Heart left ventricle (tissue), 16 donors: ENCODE measurements at regions of chr11 and their contacts with region 1.

Region 1: DNA sequence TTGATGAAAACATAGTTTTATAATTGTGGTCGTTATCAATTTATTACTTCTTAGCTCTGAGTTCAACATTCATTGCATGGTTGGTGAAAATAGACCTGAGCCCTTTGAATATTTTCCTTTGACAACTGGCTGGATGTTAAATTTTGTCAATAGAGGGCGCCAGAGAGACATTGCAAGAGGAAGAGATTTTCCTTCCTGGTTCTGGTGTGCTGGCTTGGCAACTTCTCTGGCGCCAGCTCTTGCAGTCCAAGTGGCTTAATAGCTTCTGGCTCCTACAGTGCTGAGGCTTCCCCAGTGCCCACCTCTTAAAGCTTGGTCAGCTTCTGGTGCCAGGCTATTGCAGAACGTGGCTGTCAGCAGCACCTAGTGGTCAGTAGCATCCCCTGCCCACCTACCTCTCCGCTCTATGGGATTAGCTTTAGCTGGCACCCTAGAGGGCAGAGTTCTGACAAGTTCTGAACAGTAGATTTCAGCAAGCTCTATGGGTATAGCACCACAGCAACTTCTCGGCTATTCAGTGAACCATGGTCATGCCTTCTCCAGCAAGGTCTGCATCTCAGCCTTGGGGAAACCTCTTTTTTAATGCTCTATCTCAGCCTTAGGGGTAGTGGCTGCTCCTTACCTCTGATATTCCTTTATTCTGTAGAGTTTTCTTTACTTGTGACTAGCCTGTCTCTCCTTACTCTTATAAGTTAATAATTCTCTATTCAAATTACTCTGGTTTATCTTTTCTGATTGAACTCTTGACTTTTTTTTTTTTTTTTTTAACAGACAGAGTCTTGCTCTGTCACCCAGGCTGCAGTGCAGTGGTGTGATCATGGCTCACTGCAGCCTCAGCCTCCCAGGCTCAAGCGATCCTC is 59.4 kb downstream of the ACER3 start:
- DNase-seq: peak; percentile 68 to 84 (median 75)
- ATAC-seq: peak; percentile 78 to 93 (median 89)
- H3K4me3 ChIP-seq: peak overlapping the region in 4 of 12 donors; percentile 9 to 22 (median 14)
- H3K27ac ChIP-seq: no peak overlapping the region
- H3K4me1 ChIP-seq: peaks cover 0 to 20% (median 8%) of the 10 kb centered on the region in 12 donors
- H3K27me3 ChIP-seq: no peaks in the 10 kb centered on the region
- CTCF ChIP-seq: peak; percentile 84 to 94 (median 92)
- POLR2A ChIP-seq: no peak

Region 2: GRCh38 chr11:76721755-76722677 is 198.1 kb before region 1 on chr11:
- intact Hi-C with region 1: loop called in 1 of 10 experiments (anchors 5 kb)
- DNase-seq: peak; percentile 81 to 91 (median 83)
- ATAC-seq: peak; percentile 68 to 93 (median 92)
- H3K4me3 ChIP-seq: peak overlapping the region in 4 of 12 donors; percentile 11 to 34 (median 28)
- H3K27ac ChIP-seq: no peak overlapping the region
- H3K4me1 ChIP-seq: peaks cover 0 to 12% (median 4%) of the 10 kb centered on the region in 12 donors
- H3K27me3 ChIP-seq: peaks cover 0 to 17% (median 0%) of the 10 kb centered on the region in 9 donors
- CTCF ChIP-seq: peak; percentile 84 to 95 (median 90)
- POLR2A ChIP-seq: no peak

Region 3: DNA sequence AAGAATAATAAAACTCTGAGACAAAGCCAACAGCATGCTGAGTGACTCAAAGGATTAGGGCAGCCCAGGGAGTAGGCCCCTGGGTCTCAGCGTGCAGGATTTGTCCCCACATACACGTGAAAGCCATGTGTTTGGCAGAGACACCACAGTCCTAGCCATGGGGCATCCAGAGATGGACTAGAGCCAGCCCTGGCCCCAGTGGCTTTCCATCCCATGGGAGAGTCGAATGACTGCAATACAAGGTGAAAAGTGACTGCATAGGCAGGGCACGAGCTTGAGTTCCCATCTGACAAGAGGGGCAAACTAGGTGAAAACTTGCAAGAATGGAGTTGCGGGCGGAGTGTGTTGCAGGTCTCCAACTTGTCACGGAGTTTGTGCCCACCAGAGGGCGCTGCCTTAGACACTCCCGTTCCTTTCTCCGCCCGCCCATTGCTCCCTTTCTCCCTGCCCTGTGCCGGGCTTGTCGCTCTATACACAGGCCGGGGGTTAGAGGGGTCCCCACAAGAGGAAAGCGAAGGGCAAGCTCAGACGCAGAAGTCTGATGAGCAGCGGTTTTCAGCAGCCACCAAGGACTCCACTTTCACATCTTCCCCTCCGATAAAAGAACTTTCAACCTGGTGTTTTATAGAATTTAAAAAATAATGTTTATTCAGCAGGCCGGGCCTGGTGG is 112.8 kb before region 1 on chr11:
- intact Hi-C with region 1: loop called (anchors 1 to 5 kb)
- DNase-seq: peak; percentile 84 to 91 (median 90)
- ATAC-seq: peak; percentile 73 to 90 (median 84)
- H3K4me3 ChIP-seq: peak overlapping the region in 3 of 12 donors; percentile 29 to 41 (median 33)
- H3K27ac ChIP-seq: peak overlapping the region in 2 of 12 donors; percentile 22 to 28
- H3K4me1 ChIP-seq: peaks cover 0 to 27% (median 7%) of the 10 kb centered on the region in 12 donors
- H3K27me3 ChIP-seq: no peaks in the 10 kb centered on the region
- CTCF ChIP-seq: peak; percentile 72 to 90 (median 80)
- POLR2A ChIP-seq: no peak

Region 4: DNA sequence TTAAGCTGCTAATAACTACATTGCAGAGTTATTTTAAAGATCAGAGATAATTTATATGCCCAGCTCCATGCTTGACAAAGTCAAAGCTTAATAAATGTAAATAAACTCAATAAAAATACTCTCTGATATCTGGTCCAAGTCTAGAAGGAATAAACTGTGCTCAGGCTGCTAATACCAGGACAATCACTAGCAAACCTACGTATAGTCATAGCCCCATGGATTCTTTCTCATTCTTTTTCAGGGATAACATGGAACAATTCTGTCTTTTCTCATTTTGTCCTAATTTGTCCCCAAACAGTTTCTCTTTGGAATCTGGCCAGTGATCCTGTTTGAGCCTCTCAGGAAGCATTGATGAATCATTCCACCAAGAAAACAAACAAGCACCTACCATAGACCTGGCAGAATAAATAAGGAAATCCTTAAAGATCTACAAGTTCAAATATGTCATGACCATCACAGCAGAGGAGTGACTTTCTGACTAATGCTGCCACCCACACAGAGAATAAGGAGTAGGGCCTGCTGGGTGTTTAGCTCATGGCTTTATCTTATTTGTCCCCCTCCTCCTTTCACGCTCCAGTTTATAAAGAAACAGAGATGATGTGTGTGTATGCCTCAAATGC is 100.0 kb after region 1 on chr11:
- intact Hi-C with region 1: loop called in 1 of 10 experiments (anchors 10 kb)
- DNase-seq: no peak
- ATAC-seq: no peak
- H3K4me3 ChIP-seq: no peak overlapping the region
- H3K27ac ChIP-seq: no peak overlapping the region
- H3K4me1 ChIP-seq: no peaks in the 10 kb centered on the region
- H3K27me3 ChIP-seq: no peaks in the 10 kb centered on the region
- CTCF ChIP-seq: no peak
- POLR2A ChIP-seq: no peak

Region 5: GRCh38 chr11:77047007-77047927 is 127.2 kb after region 1 on chr11:
- intact Hi-C with region 1: loop called in 3 of 10 experiments (anchors 10 kb)
- DNase-seq: peak in 4 of 5 donors; percentile 64 to 84 (median 77)
- ATAC-seq: peak; percentile 81 to 95 (median 88)
- H3K4me3 ChIP-seq: peak overlapping the region in 9 of 12 donors; percentile 24 to 56 (median 38)
- H3K27ac ChIP-seq: peak overlapping the region in 3 of 12 donors; percentile 9 to 49 (median 17)
- H3K4me1 ChIP-seq: peaks cover 0 to 17% (median 4%) of the 10 kb centered on the region in 12 donors
- H3K27me3 ChIP-seq: peaks cover 5 to 35% (median 18%) of the 10 kb centered on the region in 9 donors
- CTCF ChIP-seq: peak; percentile 62 to 81 (median 72)
- POLR2A ChIP-seq: no peak

Region 6: DNA sequence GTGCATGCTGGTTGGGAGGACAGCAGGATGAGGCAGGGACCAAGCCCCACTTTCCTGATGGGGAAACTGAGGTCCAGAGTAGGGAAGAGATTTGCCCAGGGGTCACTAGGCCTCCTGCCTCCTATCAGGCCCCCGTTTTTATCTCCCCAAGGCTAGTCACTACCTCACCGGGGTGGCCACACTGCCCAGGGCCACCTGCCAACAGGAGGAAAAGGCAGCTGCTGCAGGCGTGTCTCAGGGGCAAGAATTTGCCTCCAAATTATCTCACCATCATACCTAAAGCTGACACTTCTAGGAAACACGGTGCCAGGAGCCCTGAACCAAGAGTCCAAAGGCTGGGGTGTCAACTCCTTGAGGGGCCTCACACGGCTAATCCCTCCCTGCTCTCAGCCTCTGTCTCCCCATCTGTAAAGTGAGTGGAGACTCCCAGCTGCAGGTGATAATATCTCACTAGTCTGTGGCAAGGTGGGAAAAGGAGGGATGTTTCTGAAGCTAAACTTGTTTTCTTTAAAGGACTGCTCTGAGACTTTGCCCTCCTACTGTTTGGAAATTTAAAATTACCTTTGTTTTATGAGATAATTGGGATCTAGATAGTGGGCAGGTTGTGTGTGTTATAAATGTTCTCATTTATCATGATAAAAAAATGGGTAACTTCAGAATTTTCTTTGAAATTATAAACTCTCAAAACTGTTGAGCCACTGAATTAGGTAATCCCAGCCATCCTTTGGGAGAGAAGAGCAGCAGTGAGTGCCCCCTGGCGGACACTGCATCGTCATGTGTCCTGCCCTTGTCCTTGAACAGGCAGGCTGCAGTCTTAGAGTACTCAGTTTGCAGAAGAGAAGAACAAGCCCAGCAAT is 267.9 kb after region 1 on chr11:
- intact Hi-C with region 1: loop called in 1 of 10 experiments (anchors 10 kb)
- DNase-seq: peak; percentile 72 to 89 (median 81)
- ATAC-seq: peak; percentile 75 to 90 (median 84)
- H3K4me3 ChIP-seq: no peak overlapping the region
- H3K27ac ChIP-seq: no peak overlapping the region
- H3K4me1 ChIP-seq: no peaks in the 10 kb centered on the region
- H3K27me3 ChIP-seq: no peaks in the 10 kb centered on the region
- CTCF ChIP-seq: peak; percentile 79 to 93 (median 90)
- POLR2A ChIP-seq: no peak